Activated CD4-positive, alpha-beta memory T cell treated with anti-CD3 and anti-CD28 coated beads for 36 hours (primary cell): ENCODE measurements at regions of chr2 and their contacts with region 1.

Region 1: DNA sequence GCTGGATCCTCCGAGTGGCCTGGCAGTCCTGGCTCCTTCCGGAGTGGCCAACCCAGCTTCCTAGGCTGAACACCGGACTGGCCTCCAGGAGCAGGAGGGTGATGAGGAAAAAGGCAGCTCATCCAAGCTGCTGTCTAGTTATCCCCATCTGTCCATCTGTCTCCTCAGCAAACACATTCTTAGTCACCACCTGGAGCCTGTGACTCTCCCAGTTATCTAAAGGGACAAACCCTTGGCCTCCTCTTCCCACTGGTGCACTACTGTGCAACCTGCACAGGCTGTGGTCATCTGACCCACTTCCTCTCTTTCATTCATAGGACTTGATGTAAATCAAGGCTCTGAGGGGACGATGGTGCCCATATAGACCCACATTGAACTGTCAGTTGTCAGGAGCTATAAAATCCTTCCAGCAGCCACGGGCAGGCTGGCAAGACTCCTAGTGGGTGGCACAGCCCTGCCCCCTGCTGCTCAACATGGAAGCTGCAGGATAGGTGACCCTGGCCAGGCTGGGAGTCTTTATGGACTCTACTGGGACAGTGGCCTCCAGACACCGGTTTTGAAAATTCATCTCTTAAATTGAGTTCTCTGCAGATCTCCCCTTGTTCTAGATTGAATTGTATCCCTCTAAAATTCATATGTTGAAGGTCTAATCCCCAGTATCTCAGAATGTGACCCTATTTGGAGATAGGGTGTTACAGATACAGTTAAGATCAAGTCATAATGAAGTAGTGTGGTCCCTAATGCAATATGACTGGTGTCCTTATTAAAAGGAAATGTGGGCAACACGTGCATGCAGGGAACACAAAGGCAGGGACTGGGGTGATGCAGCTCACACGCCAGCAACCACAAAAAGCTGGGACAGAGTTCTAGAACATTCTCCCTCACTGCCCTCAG is 29.3 kb upstream of the DUSP2 start:
- DNase-seq: peak; percentile 91
- H3K4me3 Mint-ChIP-seq: peak overlapping the region; percentile 48
- H3K27ac Mint-ChIP-seq: peak overlapping the region; percentile 87
- H3K4me1 Mint-ChIP-seq: peaks cover 19% of the 10 kb centered on the region
- H3K27me3 Mint-ChIP-seq: peaks cover 2% of the 10 kb centered on the region

Region 2: DNA sequence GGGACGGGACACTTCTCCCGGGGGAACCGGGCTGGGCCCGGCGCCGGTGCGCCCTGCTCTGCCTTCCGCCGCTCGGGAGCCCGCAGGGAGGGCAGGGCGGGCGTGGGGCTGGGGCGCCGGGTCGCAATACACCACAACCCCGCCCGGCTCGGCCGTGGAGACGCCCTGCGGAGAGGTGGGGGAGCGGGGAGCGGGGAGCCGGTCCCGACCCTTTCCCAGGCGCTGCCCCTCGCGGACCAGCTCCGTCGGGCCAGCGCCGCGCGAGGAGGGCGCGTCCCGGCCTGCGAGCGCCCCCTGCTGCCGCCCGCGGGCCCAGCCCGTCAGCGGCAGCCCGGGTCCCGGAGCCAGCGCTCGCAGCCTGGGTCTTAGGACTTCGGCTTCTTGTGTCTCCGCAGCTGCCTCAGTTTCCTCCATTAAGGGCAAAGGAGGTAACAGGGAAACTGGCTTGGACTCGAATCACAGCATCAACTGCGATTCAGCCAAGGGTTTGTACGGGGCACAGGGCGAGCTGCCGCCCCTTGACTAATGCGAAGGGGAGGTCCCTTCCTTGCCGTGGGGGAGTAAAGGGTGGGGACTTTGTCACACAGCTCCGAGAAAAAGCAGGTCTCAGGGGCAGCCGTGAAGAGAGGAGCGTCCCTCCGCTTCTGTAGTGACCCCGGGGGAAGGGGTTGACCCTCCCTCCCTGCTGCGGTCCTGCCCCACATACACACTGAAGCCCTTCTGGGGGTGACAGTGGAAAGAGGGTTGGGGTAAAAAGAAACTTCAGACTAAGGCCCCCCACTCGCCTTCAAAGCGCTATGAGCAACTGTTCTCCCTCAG is 57.4 kb before region 1 on chr2:
- CTCF ChIA-PET with region 1: interaction called, 68 read pairs
- POLR2A ChIA-PET with region 1: interaction called, 6 read pairs
- intact Hi-C with region 1: no loop called
- DNase-seq: peak; percentile 69
- H3K4me3 Mint-ChIP-seq: peak overlapping the region; percentile 39
- H3K27ac Mint-ChIP-seq: no peak overlapping the region
- H3K4me1 Mint-ChIP-seq: peaks cover 13% of the 10 kb centered on the region
- H3K27me3 Mint-ChIP-seq: peaks cover 41% of the 10 kb centered on the region

Region 3: GRCh38 chr2:96138179-96139145 is 36.0 kb before region 1 on chr2 and contains the start of gene ASTL:
- CTCF ChIA-PET with region 1: interaction called, 474 read pairs
- POLR2A ChIA-PET with region 1: interaction called, 61 read pairs
- intact Hi-C with region 1: loop called (anchors 1 kb)
- DNase-seq: peak; percentile 75
- H3K4me3 Mint-ChIP-seq: no peak within 1 kb of the TSS
- H3K27ac Mint-ChIP-seq: peak within 1 kb of the TSS; percentile 23
- H3K4me1 Mint-ChIP-seq: peaks cover 32% of the 10 kb centered on the region
- H3K27me3 Mint-ChIP-seq: no peaks in the 10 kb centered on the region
- total RNA-seq, gene ASTL: 1.8 to 2.4 TPM

Region 4: GRCh38 chr2:96152301-96153165 is 22.0 kb before region 1 on chr2:
- CTCF ChIA-PET with region 1: interaction called, 474 read pairs
- POLR2A ChIA-PET with region 1: interaction called, 7 read pairs
- intact Hi-C with region 1: no loop called
- DNase-seq: peak; percentile 8
- H3K4me3 Mint-ChIP-seq: no peak overlapping the region
- H3K27ac Mint-ChIP-seq: no peak overlapping the region
- H3K4me1 Mint-ChIP-seq: peaks cover 78% of the 10 kb centered on the region
- H3K27me3 Mint-ChIP-seq: peaks cover 1% of the 10 kb centered on the region

Region 5: DNA sequence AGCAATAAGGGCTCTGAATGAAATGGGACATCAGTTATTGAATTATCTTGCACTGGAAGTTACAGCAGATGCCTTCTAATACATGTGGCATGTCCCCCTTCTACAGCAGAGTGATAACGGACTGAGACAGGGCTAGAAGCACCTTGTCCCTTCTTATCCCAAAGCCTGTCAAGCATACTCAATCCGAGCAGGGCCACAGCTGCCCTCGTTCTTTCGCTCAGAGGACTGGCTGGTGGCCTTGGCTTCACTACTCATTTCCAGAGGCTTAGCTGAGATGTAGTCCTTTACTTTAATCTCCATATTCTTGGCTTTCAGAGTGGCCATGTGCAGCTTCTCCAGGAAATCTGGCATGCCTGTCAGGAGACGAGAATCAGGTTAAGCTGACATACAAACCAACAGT is 12.1 kb after region 1 on chr2:
- CTCF ChIA-PET with region 1: interaction called, 15 read pairs
- POLR2A ChIA-PET with region 1: no interaction called
- intact Hi-C with region 1: no loop called
- DNase-seq: no peak
- H3K4me3 Mint-ChIP-seq: no peak overlapping the region
- H3K27ac Mint-ChIP-seq: no peak overlapping the region
- H3K4me1 Mint-ChIP-seq: no peaks in the 10 kb centered on the region
- H3K27me3 Mint-ChIP-seq: no peaks in the 10 kb centered on the region

Region 6: DNA sequence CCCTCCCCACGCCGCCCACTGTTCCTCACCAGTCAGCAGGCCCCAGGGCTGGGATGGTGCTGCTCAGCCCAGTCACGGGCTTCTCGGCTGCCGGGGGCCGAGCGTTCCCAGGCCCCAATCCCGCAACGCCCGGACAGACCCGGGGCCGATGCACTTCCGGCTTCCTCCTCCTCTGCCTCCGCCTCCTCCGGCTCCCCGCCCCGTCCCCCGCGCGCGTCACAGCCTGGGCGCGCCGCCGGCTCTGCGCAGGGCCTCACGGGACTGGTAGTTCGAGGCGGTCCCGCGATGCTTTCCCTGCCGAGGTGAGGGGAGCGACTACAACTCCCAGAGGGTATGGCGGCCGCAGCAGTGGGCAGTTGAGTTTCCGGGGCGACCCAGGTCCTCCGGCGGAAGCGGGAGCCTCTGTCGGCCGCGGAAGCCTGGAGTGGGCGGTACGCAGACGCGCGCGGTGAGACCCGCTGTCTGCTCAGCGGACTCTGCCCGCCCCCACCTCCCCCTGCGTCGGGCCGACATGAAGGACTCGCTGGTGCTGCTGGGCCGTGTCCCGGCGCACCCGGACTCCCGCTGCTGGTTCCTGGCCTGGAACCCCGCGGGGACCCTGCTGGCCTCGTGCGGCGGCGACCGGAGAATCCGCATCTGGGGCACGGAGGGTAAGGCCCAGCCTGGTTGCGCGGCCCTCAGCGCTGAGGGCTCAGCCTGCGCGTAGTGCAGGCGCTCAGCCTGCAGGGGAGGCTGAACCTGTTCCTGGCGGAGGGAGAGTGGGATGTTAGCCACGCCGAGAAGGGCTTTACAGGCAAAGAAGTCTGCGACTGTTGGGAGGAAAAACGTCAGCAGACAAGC is 91.6 kb after region 1 on chr2 and contains the starts of genes CIAO1 and TMEM127:
- CTCF ChIA-PET with region 1: interaction called, 13 read pairs
- POLR2A ChIA-PET with region 1: no interaction called
- intact Hi-C with region 1: no loop called
- DNase-seq: peak; percentile 99
- H3K4me3 Mint-ChIP-seq: peak within 1 kb of the TSS; percentile 99
- H3K27ac Mint-ChIP-seq: peak within 1 kb of the TSS; percentile 97
- H3K4me1 Mint-ChIP-seq: peaks cover 50% of the 10 kb centered on the region
- H3K27me3 Mint-ChIP-seq: no peaks in the 10 kb centered on the region
- total RNA-seq, gene CIAO1: 86.6 to 87.1 TPM
- total RNA-seq, gene TMEM127: 19.3 to 22.2 TPM